PC-9 (cell line): ENCODE measurements at regions of chr17 and their contacts with region 1.

Region 1: DNA sequence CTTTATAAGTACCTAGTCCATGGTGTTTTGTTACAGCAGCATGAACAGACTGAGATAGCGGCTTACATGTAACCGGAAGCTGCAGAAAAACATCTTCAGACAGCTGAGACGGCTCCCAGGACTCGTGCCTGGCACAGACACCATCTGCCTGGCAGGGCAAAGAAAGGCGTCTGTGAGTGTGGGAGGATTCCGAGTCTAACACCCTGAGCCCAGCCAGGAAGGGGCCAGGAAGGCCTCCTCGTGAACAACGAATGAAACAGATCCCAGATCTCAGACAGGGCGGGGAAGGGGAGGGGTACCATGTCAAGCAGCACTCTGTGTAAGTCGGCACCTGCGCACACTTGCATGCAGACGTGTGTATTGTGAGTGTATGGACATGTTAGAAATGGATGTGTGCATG is 4.4 kb upstream of the CSNK1D start:
- DNase-seq: no peak
- H3K4me3 ChIP-seq: no peak overlapping the region
- H3K27ac ChIP-seq: no peak overlapping the region
- H3K4me1 ChIP-seq: peaks cover 45% of the 10 kb centered on the region
- H3K27me3 ChIP-seq: no peaks in the 10 kb centered on the region
- CTCF ChIP-seq: no peak

Region 2: GRCh38 chr17:82236142-82236981 is 41.5 kb before region 1 on chr17:
- CTCF ChIA-PET with region 1: no interaction called
- POLR2A ChIA-PET with region 1: no interaction called
- intact Hi-C with region 1: no loop called
- DNase-seq: peak in 1 of 2 experiments; percentile 63
- H3K4me3 ChIP-seq: no peak overlapping the region
- H3K27ac ChIP-seq: no peak overlapping the region
- H3K4me1 ChIP-seq: peaks cover 43% of the 10 kb centered on the region
- H3K27me3 ChIP-seq: no peaks in the 10 kb centered on the region
- CTCF ChIP-seq: peak; percentile 79

Region 3: GRCh38 chr17:82257473-82257872 is 20.4 kb before region 1 on chr17:
- CTCF ChIA-PET with region 1: no interaction called
- POLR2A ChIA-PET with region 1: interaction called, 18 read pairs
- intact Hi-C with region 1: no loop called
- DNase-seq: no peak
- H3K4me3 ChIP-seq: no peak overlapping the region
- H3K27ac ChIP-seq: no peak overlapping the region
- H3K4me1 ChIP-seq: no peaks in the 10 kb centered on the region
- H3K27me3 ChIP-seq: no peaks in the 10 kb centered on the region
- CTCF ChIP-seq: no peak

Region 4: DNA sequence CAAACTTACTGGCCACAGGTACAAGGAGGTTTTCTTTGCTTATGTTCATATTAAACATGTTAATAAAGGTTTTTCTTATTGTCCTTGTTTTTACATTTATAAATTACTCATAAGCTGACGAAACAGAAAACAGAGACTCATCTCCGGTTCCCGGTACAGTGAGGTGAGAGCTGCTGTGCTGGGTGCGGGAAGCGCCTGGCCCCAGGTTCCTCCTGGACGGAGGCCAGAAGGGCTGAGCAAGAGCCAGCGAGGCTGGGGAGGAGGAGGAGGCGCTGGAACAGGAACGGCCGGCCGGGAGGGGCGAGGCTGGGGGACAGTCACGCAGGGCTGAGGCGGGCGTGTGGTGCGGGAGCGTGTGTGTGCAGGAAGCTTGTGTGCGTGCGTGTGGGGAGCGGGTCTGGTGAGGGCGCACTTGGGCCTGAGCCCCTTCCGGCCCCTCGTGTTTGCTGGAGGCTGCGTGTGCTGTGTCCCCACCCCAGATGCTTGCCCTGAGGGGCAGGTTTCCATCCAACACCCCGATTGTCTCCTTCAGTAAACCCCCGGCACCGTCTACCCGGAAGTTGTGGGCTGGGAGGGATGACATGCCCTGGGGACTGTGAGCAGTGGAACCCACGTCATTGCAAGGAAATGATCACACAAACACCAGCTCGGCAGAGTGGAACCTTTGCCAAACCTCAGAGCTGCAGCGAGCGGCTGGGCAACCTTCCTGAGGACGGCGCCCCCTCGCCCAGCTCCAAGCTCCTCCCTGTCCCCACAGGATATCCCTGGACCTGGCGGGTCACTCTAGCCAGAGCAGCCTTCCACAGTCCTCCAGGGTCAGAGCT is 20.1 kb after region 1 on chr17:
- CTCF ChIA-PET with region 1: no interaction called
- POLR2A ChIA-PET with region 1: interaction called, 18 read pairs
- intact Hi-C with region 1: loop called (anchors 2 kb)
- DNase-seq: peak; percentile 73 to 87
- H3K4me3 ChIP-seq: peak overlapping the region; percentile 43
- H3K27ac ChIP-seq: peak overlapping the region; percentile 83
- H3K4me1 ChIP-seq: peaks cover 22% of the 10 kb centered on the region
- H3K27me3 ChIP-seq: no peaks in the 10 kb centered on the region
- CTCF ChIP-seq: no peak

Region 5: DNA sequence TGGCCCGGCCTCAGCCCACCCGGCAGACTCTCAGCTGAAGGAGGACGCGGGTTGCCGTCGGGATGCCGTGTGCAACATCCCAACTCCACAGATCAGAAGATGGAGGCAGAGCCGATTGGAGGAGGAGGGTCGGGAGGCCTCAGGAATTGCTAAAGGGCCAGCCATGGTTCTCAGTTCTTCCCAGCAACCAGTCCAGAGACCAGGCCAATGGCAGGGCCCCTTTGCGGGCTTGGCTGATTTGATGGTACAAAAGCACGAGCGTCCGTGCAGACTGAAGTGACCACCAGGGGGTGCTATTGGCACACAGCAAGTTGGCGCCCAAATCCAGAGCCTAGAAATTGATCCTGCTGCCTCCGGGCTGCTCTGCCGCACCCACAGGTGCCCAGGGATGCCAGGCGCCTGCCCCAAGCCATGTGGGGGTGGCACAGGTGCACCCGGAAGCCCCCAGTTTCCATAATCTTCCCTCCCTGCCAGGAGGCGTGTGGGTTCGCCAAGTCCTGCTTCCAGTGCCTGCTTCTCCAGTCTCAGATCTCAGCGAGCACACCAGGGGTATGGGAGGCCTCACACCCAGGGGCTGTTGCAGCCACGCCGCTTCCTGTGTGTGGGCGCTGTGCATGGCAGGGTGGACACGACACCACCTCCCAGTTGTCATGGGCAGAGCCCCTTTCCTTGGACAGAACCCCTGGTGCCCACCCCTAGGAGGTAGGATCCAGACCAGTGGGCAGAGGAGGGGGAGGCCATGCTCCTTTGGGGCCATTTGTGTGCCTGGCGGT is 74.1 kb after region 1 on chr17:
- CTCF ChIA-PET with region 1: no interaction called
- POLR2A ChIA-PET with region 1: no interaction called
- intact Hi-C with region 1: no loop called
- DNase-seq: peak; percentile 63 to 78
- H3K4me3 ChIP-seq: no peak overlapping the region
- H3K27ac ChIP-seq: no peak overlapping the region
- H3K4me1 ChIP-seq: no peaks in the 10 kb centered on the region
- H3K27me3 ChIP-seq: no peaks in the 10 kb centered on the region
- CTCF ChIP-seq: peak; percentile 81

Region 6: DNA sequence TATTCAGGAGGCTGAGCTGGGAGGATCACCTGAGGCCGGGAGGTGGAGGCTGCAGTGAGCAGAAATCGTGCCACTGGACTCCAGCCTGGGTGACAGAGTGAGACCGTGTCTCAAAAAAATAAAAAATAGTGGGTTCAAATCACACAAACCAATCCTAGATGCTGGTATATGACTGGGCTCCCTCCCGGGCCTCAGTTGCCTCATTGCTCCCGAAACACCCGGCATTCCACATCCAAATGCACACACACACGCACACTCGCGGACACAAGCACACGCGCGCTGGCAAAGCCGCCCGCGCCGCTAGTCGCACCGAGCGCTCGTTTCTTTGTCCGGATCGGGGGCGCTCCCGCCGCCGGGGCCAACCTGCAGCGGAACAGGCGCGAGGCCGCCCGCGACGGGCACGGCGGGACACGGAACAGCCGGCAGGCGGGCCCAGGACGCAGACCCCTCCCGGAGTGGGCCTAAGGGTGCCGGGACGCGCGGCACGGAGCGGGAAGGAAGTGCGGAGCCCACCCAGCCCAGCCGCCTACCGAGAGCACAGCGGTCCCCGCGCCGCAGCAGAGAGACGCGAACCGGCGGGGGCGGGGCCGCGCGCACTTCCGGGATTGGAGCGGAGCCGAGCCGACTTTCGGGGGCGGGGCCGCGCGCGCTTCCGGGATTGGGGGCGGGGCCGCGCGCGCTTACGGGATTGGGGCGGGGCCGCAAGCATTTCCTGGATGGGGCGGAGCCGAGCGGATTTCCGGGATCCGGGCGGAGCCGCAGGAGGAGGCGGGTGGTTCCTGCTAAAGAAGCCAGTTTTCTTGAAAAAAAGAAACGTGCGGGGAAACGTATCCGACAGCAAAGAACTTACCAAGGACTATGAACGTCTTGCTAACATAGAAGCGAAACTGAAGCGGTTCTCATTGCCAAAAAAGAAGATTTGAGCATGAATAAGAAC is 172.6 kb after region 1 on chr17 and contains the start of gene CYBC1:
- CTCF ChIA-PET with region 1: no interaction called
- POLR2A ChIA-PET with region 1: no interaction called
- intact Hi-C with region 1: no loop called
- DNase-seq: peak; percentile 65 to 90
- H3K4me3 ChIP-seq: peak within 1 kb of the TSS; percentile 94
- H3K27ac ChIP-seq: peak within 1 kb of the TSS; percentile 43; the same call in 1 of the 2 replicates
- H3K4me1 ChIP-seq: peaks cover 12% of the 10 kb centered on the region; the same call in 1 of the 2 replicates
- H3K27me3 ChIP-seq: no peaks in the 10 kb centered on the region
- CTCF ChIP-seq: no peak
- total RNA-seq, gene CYBC1: 77.9 and 78.4 TPM in 2 replicates